ENCODE measurements at regions of chr3 and their contacts with region 1.

Region 1: DNA sequence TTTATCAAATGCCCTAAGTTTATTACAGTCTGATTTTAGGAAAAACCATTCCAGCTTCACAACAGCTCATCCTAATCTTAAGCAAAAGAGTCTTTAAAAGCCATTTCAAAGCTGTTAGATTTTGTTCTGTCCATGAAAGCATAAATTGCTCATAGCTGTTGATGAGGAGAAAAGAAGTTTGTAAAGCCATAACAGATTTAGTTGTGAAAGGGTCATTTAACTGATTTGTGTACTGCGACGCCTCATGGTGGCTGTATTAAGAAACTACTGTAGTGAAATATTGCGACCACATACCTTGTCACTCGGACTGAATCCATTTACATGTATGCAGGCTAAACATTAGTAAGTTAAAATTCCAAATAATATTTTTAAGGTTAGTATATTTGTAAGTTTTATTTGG is 20.9 kb downstream of the BBX start:
- DNase-seq: no peak
- H3K4me3 ChIP-seq: no peak overlapping the region
- H3K27me3 ChIP-seq: no peaks in the 10 kb centered on the region
- CTCF ChIP-seq: 0 out of 2 replicates have a peak, but pooled peaks have one; percentile 15

Region 2: GRCh38 chr3:106305882-106306435 is 1237.7 kb before region 1 on chr3:
- CTCF ChIA-PET with region 1: no interaction called
- POLR2A ChIA-PET with region 1: interaction called, 10 read pairs
- DNase-seq: peak; percentile 47
- H3K4me3 ChIP-seq: no peak overlapping the region
- H3K27me3 ChIP-seq: no peaks in the 10 kb centered on the region
- CTCF ChIP-seq: no peak

Measured in BJ (cell line).